CD4-positive, alpha-beta memory T cell (primary cell): ENCODE measurements at regions of chr1 and their contacts with region 1.

Region 1: DNA sequence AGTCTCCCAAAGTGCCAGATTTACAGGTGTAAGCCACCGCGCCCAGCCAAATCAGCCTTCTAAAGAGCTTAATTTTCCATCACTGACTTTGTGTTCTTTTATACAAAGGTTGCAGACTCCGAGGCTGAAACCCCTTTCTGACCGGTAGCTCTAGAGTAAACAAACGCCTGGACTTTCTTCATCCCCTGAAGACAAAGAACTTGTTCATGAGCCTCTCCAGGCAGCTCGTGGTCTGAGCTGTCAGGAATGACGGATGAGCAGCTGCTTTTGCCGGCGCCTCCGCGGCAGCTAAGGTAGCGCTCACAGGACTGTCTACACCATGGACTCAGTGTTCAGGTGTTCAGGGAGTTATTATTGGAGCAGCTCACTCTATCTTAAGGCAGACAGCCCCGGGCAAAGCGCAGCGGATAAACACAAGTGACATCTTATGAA is 128.5 kb upstream of the ERRFI1 start:
- DNase-seq: no peak
- H3K4me3 ChIP-seq: no peak overlapping the region
- H3K4me3 Mint-ChIP-seq: no peak overlapping the region
- H3K27ac ChIP-seq: no peak overlapping the region
- H3K27ac Mint-ChIP-seq: peak overlapping the region in 4 of 7 donors; percentile 42 to 74 (median 56)
- H3K4me1 ChIP-seq: peaks cover 50% of the 10 kb centered on the region
- H3K4me1 Mint-ChIP-seq: peaks cover 28 to 59% (median 39%) of the 10 kb centered on the region in 4 donors
- H3K27me3 ChIP-seq: no peaks in the 10 kb centered on the region
- H3K27me3 Mint-ChIP-seq: no peaks in the 10 kb centered on the region

Region 2: GRCh38 chr1:7366955-7367665 is 787.5 kb before region 1 on chr1:
- CTCF ChIA-PET with region 1: no interaction called
- POLR2A ChIA-PET with region 1: no interaction called
- intact Hi-C with region 1: no loop called
- DNase-seq: no peak
- H3K4me3 ChIP-seq: no peak overlapping the region
- H3K4me3 Mint-ChIP-seq: no peak overlapping the region
- H3K27ac ChIP-seq: no peak overlapping the region
- H3K27ac Mint-ChIP-seq: no peak overlapping the region
- H3K4me1 ChIP-seq: no peaks in the 10 kb centered on the region
- H3K4me1 Mint-ChIP-seq: no peaks in the 10 kb centered on the region
- H3K27me3 ChIP-seq: no peaks in the 10 kb centered on the region
- H3K27me3 Mint-ChIP-seq: no peaks in the 10 kb centered on the region

Region 3: DNA sequence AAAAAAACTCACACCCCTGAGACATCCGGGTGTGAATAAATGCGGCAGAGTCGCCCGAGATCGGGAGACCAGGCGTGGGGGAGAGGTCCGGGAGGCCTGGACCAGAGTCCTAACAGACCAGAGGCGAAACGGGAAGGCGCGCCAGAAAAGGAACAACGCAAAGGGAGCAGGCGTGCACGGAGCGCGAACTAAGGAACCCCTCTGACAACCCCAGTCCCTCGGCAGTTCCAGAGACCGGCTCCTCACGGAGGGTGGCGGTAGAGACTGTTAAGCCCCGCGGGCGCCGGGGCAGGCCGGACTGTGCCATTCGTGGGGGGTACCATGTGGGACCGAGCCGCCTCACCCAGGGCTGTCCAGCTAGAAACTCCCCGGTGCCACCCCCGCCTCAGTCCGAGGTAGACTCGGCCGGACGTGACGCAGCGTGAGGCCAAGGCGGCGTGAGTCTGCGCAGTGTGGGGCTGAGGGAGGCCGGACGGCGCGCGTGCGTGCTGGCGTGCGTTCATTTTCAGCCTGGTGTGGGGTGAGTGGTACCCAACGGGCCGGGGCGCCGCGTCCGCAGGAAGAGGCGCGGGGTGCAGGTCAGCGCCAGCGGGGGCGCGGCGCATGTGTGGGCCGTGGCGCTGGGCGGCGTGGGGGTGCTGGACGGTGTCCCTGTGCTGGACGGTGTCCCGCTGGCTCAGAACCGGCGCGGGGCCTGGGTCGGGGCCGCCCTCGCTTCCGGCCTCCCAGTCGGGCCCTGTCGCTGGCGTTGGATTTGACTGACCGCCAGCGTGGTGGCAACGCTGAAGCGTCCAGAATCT is 193.2 kb before region 1 on chr1 and contains the start of gene PARK7:
- CTCF ChIA-PET with region 1: no interaction called
- POLR2A ChIA-PET with region 1: no interaction called
- intact Hi-C with region 1: loop called (anchors 5 kb)
- DNase-seq: peak; percentile 99 to 100 (median 100)
- H3K4me3 ChIP-seq: peak within 1 kb of the TSS; percentile 86 to 97
- H3K4me3 Mint-ChIP-seq: peak within 1 kb of the TSS; percentile 97 to 100 (median 98)
- H3K27ac ChIP-seq: peak within 1 kb of the TSS; percentile 94
- H3K27ac Mint-ChIP-seq: peak within 1 kb of the TSS; percentile 97 to 100 (median 99)
- H3K4me1 ChIP-seq: peaks cover 62% of the 10 kb centered on the region
- H3K4me1 Mint-ChIP-seq: peaks cover 33 to 72% (median 57%) of the 10 kb centered on the region in 4 donors
- H3K27me3 ChIP-seq: no peaks in the 10 kb centered on the region
- H3K27me3 Mint-ChIP-seq: no peaks in the 10 kb centered on the region
- total RNA-seq, gene PARK7: 112 to 122 TPM

Region 4: GRCh38 chr1:8104278-8105236 is 50.1 kb before region 1 on chr1:
- CTCF ChIA-PET with region 1: no interaction called
- POLR2A ChIA-PET with region 1: no interaction called
- intact Hi-C with region 1: loop called (anchors 10 kb)
- DNase-seq: no peak
- H3K4me3 ChIP-seq: no peak overlapping the region
- H3K4me3 Mint-ChIP-seq: no peak overlapping the region
- H3K27ac ChIP-seq: no peak overlapping the region
- H3K27ac Mint-ChIP-seq: peak overlapping the region in 1 of 7 donors; percentile 53
- H3K4me1 ChIP-seq: no peaks in the 10 kb centered on the region
- H3K4me1 Mint-ChIP-seq: peaks cover 0 to 2% (median 0%) of the 10 kb centered on the region in 4 donors
- H3K27me3 ChIP-seq: no peaks in the 10 kb centered on the region
- H3K27me3 Mint-ChIP-seq: peaks cover 2 to 5% of the 10 kb centered on the region in 2 donors

Region 5: GRCh38 chr1:8169364-8170058 is 14.9 kb after region 1 on chr1:
- CTCF ChIA-PET with region 1: interaction called, 5 read pairs
- POLR2A ChIA-PET with region 1: interaction called, 57 read pairs
- intact Hi-C with region 1: loop called (anchors 1 kb)
- DNase-seq: peak; percentile 67 to 79 (median 77)
- H3K4me3 ChIP-seq: peak overlapping the region in 1 of 2 donors; percentile 15
- H3K4me3 Mint-ChIP-seq: peak overlapping the region; percentile 43 to 86 (median 78)
- H3K27ac ChIP-seq: peak overlapping the region; percentile 44
- H3K27ac Mint-ChIP-seq: peak overlapping the region; percentile 88 to 99 (median 97)
- H3K4me1 ChIP-seq: peaks cover 41% of the 10 kb centered on the region
- H3K4me1 Mint-ChIP-seq: peaks cover 22 to 53% (median 34%) of the 10 kb centered on the region in 4 donors
- H3K27me3 ChIP-seq: no peaks in the 10 kb centered on the region
- H3K27me3 Mint-ChIP-seq: peaks cover 0 to 1% of the 10 kb centered on the region in 2 donors

Region 6: GRCh38 chr1:8217011-8217711 is 62.5 kb after region 1 on chr1:
- CTCF ChIA-PET with region 1: no interaction called
- POLR2A ChIA-PET with region 1: no interaction called
- intact Hi-C with region 1: loop called (anchors 5 kb)
- DNase-seq: peak in 4 of 5 donors; percentile 12 to 22 (median 16)
- H3K4me3 ChIP-seq: peak overlapping the region in 1 of 2 donors; percentile 28
- H3K4me3 Mint-ChIP-seq: peak overlapping the region; percentile 61 to 89 (median 76)
- H3K27ac ChIP-seq: no peak overlapping the region
- H3K27ac Mint-ChIP-seq: peak overlapping the region in 4 of 7 donors; percentile 37 to 79 (median 72)
- H3K4me1 ChIP-seq: peaks cover under 1% of the 10 kb centered on the region
- H3K4me1 Mint-ChIP-seq: peaks cover 4 to 12% (median 6%) of the 10 kb centered on the region in 4 donors
- H3K27me3 ChIP-seq: peaks cover 6% of the 10 kb centered on the region
- H3K27me3 Mint-ChIP-seq: peaks cover 12 to 14% of the 10 kb centered on the region in 2 donors